Astrocyte of the cerebellum (primary cell): ENCODE measurements at regions of chr19 and their contacts with region 1.

Region 1: GRCh38 chr19:46967578-46968027 is 52.0 kb upstream of the NPAS1 start:
- DNase-seq: no peak
- H3K4me3 ChIP-seq: no peak overlapping the region
- CTCF ChIP-seq: no peak

Region 2: DNA sequence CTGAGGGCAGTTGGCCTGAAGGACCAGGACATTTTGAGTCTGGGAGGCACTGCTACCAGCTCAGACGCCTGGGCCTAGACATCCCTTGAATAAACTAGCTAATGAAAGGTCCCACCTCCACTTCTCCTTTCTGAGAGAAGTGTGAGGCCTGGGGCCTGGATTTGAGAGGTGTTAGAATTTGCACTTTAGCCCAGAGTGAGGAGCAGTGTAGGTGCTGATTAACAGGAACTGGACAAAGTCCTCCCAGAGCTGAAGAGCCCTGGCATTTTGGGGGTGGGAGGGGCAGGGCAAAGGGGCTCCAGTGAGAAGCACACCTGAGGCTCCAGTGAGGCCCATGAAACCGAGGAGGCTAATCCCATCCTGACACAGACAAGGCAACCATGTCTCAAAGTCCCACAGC is 164.0 kb before region 1 on chr19:
- in situ Hi-C with region 1: no loop called
- DNase-seq: no peak
- H3K4me3 ChIP-seq: no peak overlapping the region
- CTCF ChIP-seq: no peak

Region 3: DNA sequence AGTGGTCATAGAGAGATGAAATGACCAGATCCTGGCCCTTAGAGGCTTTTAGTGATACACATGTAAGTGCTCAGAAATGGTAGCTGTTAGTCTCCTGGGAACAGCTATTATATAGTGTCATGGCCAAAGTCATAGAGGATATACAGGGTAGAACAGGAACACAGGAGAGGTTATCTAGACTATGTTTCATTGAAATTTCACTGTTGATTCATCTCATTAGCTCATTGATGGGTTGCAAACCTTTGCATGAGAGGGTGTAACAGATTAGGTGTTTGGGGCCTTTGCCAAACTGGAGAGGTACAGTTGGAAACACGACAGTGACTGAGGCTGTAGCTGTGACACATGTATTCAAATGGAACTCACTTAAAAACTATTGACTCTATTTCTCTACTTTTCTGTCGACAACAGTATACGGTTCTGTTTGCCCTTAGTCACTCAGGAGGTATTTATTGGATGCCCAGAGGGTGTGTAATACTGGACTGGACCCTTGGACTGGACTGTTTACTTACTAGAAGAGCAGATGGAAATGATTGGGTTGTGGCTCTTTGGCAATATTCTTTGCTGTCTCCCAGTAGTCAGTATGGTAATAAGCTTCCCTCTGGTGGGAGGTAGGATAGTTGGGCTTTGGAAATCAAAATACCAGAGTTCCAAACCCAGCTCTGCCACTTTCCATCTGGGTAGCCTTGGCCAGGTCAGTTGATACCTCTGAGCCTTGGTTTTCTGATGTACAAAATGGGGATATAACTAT is 77.0 kb before region 1 on chr19:
- in situ Hi-C with region 1: loop called (anchors 5 kb)
- DNase-seq: peak; percentile 38
- H3K4me3 ChIP-seq: no peak overlapping the region
- CTCF ChIP-seq: no peak

Region 4: GRCh38 chr19:46924874-46925547 is 42.6 kb before region 1 on chr19:
- in situ Hi-C with region 1: loop called (anchors 5 kb)
- DNase-seq: no peak
- H3K4me3 ChIP-seq: no peak overlapping the region
- CTCF ChIP-seq: no peak

Region 5: GRCh38 chr19:47047763-47048405 is 80.3 kb after region 1 on chr19:
- in situ Hi-C with region 1: no loop called
- DNase-seq: peak; percentile 72
- H3K4me3 ChIP-seq: peak overlapping the region; percentile 81
- CTCF ChIP-seq: no peak

Region 6: DNA sequence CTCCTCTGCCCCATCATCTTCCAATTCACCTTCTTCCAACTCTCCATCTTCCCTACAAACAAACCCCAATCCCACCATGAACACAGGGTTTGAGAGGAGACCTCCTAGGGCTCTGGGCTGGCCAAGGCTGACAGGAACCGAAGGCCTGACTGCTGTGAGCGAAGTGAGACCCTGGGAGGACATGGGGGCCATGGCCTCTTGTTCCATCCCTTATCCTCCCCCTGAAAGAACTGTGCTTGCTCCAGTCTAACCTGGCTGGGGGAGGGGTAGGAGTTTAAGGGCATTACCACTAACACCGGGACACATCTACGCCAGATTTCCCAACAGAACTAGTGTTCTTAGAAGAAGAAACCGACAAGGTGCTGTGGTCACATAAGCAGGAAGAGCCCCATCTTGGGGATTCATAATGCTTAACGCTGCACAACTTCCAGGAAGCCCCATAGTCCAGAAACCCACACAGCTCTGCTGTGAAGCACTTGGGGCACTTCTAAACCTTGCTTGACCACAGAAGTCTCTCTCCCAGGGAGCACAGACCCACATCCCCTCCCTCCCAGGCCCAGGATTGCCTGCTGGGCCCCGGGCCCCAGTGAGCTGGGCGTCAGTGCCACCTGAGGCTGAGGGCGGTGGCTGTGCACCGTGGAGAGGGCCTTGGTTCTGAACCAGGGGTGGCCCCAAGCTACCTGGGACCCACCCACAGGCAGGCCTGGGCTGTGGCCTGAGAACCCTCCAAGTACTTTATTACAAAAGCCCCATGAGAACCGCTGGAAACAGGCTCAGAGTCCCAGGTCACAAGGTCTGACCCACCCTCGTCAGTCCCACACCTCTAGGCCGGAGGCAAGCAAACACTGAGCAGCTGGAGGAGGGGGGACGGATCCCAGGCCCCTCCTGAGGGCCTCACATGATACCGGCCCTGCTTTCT is 127.2 kb after region 1 on chr19:
- in situ Hi-C with region 1: no loop called
- DNase-seq: no peak
- H3K4me3 ChIP-seq: no peak overlapping the region
- CTCF ChIP-seq: no peak